ENCODE measurements at regions of chr10 and their contacts with region 1.

Region 1: GRCh38 chr10:126387023-126387921 is 1.0 kb downstream of the ADAM12 start:
- DNase-seq: no peak
- H3K4me3 Mint-ChIP-seq: peak overlapping the region; percentile 51
- H3K27ac Mint-ChIP-seq: peak overlapping the region; percentile 59
- H3K4me1 Mint-ChIP-seq: peaks cover 7% of the 10 kb centered on the region
- H3K27me3 Mint-ChIP-seq: peaks cover 26% of the 10 kb centered on the region

Region 2: GRCh38 chr10:125982260-125982948 is 404.9 kb before region 1 on chr10:
- intact Hi-C with region 1: loop called (anchors 10 kb)
- DNase-seq: no peak
- H3K4me3 Mint-ChIP-seq: no peak overlapping the region
- H3K27ac Mint-ChIP-seq: no peak overlapping the region
- H3K4me1 Mint-ChIP-seq: no peaks in the 10 kb centered on the region
- H3K27me3 Mint-ChIP-seq: peaks cover 4% of the 10 kb centered on the region

Measured in activated T-helper 1 cell treated with anti-CD3 and anti-CD28 coated beads, Interleukin-12 subunit alpha, Interleukin-12 subunit beta, Interleukin-2, Interleukin-4 antibody, amounts not matched to agents 30 ng/mL and 10 ng/mL and 1 ng/mL, durations not matched to agents 14 hours and 24 hours and 36 hours (primary cell).